ENCODE measurements at regions of chr9 and their contacts with region 1.

Region 1: DNA sequence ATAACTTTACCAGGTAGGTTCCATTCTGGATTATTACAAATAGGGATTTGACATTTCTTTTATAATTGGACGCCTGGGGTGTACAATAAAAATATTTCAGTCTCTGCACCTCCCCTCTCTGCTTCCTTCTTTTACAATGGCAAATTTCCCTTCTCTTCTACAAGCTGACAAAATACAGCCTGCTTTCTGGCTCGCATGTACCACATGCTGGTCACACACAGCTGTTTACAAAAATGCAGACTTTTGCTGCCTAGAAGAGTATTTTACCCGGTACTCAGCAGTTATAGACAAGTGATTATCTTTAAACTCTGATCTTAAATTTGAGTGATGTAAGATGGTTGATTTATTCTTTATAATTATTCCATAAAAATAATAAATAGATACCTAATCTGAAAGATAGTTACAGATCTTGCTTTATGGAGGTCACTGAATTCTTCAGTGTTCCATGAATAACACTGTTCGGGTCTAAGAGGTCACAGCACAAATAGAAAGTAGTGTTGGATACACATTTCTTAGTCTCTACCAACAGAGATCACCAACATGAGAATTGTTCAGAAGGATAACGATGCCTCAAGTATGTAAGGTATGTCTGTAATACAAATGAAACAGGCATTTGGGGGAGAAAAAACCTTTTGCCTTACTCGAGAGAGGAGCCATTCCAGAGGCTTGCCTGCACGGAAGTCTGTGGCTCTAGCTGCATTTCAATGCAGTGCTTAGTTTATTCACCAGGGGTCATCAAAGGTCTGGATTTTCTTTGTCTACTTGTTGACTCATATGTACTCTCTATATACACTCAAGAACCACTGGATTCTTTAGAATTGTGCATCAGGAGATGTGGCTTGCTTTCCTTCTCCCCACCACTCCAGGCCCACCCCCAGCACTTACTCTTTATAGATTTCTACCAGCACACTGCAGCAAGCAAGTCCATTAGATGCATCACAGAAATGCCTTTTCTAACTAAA is 206.6 kb upstream of the RFX3 start:
- DNase-seq: no peak
- H3K4me3 ChIP-seq: peak overlapping the region in 2 of 4 donors; percentile 13 to 19
- H3K27ac ChIP-seq: peak overlapping the region in 3 of 4 donors; percentile 28 to 44 (median 40)
- H3K4me1 ChIP-seq: peaks cover 0 to 15% (median 0%) of the 10 kb centered on the region in 4 donors
- H3K27me3 ChIP-seq: no peaks in the 10 kb centered on the region
- CTCF ChIP-seq: peak; percentile 19 to 65 (median 57)
- EP300 ChIP-seq: no peak
- POLR2A ChIP-seq: no peak

Region 2: DNA sequence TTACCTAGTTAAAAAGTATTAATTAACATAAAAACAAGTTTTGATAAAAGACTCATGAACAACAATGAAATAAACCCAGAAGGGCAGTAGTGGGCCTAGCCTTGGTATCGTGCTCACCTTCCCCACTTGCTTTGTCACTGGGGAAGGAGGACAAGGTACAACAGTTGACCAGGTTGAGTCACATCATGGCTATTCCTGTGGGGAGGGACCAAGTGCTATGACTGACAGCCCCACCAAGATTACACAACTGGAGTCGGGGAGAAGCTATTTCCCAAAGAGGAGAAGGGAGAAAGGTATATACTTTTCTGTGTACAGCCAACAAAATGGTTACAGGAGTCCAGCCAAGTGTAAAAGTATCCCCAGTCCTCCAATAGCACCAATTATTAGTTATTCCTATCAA is 44.8 kb after region 1 on chr9:
- intact Hi-C with region 1: no loop called
- DNase-seq: no peak
- H3K4me3 ChIP-seq: no peak overlapping the region
- H3K27ac ChIP-seq: no peak overlapping the region
- H3K4me1 ChIP-seq: no peaks in the 10 kb centered on the region
- H3K27me3 ChIP-seq: no peaks in the 10 kb centered on the region
- CTCF ChIP-seq: no peak
- EP300 ChIP-seq: no peak
- POLR2A ChIP-seq: no peak

Region 3: DNA sequence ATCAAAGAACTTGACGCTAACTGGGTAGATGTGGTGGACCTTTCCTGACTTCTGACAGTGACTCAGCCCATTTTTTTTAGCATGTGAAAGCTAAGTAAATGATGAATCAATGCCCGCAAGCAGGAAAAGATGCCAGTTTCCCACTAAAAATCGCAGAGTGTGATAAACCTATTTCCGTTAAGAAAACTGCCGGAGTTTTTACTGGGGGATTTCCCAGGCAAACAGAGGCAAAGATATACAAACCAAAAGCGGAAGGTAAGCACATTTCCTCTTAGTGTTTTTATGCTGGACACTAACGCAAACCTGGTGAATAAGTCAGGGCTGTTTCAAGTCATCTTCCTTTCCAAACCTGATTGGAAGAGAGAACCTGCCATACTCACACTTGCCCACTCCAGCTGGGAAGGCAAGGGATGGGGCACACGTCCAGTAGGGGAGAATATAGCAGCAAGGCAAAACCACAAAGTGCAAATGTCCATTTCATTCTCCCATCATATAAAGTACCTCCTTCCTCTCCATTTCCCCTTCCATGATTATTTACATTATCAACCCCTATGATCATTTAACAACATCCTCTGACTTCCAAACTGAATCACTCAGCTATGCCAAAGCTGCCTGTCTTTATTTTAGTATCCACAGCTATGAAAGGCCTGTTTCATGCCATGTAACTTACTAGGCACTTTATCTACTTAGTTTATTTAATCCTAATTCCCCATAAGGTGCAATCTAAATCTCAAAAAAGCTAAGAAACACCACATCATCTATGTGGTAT is 143.2 kb after region 1 on chr9:
- intact Hi-C with region 1: no loop called
- DNase-seq: no peak
- H3K4me3 ChIP-seq: no peak overlapping the region
- H3K27ac ChIP-seq: no peak overlapping the region
- H3K4me1 ChIP-seq: no peaks in the 10 kb centered on the region
- H3K27me3 ChIP-seq: no peaks in the 10 kb centered on the region
- CTCF ChIP-seq: no peak
- EP300 ChIP-seq: no peak
- POLR2A ChIP-seq: no peak

Region 4: DNA sequence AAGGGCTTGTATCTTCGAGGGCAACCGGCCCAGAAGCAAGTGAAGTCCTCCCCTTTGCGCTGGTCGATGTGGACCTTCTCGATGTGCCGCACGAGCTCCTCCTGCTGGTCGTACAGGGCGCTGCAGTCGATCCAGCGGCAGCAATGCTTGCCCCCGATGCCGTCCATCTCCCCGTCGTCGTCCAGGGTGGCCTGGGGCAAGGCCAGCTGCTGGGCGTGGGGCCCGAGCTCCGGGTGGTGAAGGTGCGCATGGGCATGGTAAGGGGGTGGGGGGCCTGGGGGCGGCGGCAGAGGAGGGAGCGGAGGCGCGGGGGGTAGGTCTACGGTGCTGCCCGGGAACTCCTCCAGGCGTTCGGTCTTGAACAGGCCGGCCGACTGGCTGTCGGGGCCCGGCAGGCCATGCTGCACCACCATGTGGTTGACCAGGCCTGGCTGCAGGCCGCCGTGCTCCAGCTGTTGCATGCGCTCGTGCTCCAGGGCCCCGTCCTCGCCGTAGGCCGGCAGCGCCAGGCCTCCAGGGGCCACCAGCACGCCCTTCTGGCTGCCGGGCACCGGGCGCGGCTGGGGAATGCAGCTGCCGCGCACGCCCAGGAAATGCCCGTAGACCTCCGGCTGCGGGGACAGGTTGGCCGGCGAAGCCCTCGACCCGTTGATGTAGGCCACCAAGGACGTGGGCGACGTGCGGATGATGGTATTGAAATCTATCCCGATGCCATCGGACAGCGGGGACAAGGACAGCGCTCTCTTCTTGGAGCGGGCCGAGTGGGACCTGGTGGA is 385.7 kb after region 1 on chr9:
- intact Hi-C with region 1: loop called (anchors 5 kb)
- DNase-seq: no peak
- H3K4me3 ChIP-seq: no peak overlapping the region
- H3K27ac ChIP-seq: peak overlapping the region in 1 of 4 donors; percentile 76
- H3K4me1 ChIP-seq: peaks cover 0 to 36% (median 32%) of the 10 kb centered on the region in 4 donors
- H3K27me3 ChIP-seq: no peaks in the 10 kb centered on the region
- CTCF ChIP-seq: peak in 3 of 4 experiments; percentile 8 to 33 (median 12)
- EP300 ChIP-seq: no peak
- POLR2A ChIP-seq: no peak

Region 5: DNA sequence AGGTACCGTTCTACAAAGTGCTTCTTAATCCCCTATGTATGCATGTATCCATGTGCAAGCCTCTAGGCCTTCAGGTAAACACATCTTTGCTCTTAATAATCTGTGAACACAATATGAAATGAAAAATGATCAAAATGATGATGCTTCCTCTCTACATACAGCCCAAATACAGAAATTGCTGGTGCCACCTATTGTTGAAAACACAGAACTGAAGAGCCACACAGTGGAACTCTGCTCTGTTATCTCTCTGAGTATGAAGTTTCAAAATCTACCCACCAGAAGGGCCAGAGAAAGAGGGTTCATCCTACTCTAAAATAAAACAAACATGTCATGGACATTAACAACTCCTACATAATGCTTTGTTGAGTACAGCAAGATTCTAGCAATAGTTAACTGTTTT is 496.2 kb after region 1 on chr9:
- intact Hi-C with region 1: loop called (anchors 10 kb)
- DNase-seq: no peak
- H3K4me3 ChIP-seq: no peak overlapping the region
- H3K27ac ChIP-seq: no peak overlapping the region
- H3K4me1 ChIP-seq: no peaks in the 10 kb centered on the region
- H3K27me3 ChIP-seq: no peaks in the 10 kb centered on the region
- CTCF ChIP-seq: peak in 3 of 4 experiments; percentile 27 to 39 (median 38)
- EP300 ChIP-seq: no peak
- POLR2A ChIP-seq: no peak

Region 6: DNA sequence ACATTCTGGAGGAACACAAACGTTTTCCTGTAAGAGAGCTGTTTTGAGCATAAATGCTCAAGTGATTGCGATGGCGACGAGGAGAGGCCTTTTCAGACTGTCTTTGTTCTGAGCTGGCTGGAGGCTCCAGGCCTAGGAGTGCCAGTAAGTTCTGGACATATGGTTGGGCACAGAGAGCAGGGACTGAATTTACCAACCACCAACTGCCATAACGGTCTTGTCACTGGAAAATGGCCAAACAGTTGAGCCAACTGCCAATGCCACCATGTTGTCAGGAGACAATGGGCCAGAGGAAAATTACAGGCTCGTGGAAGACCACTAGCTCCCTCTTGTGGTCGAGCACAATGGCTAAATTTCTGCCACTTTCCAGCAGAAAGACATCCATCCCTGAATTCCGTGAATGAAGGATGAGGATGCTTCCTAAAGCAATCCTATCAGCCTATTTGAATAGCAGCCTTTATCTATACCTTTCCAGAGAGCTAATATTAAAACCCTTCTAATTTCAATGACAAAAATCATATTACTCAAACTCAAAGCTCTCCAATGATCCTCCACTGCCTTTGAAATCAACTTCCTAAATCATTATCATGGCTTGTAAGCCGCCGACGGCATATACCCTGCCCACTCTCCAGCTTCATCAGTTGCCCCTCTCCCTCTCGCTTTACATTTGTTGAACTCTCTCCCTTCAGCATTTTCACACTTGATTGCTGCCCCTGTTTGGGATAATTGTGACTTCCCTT is 634.4 kb after region 1 on chr9:
- intact Hi-C with region 1: loop called (anchors 2 kb)
- DNase-seq: peak; percentile 66
- H3K4me3 ChIP-seq: no peak overlapping the region
- H3K27ac ChIP-seq: peak overlapping the region in 1 of 4 donors; percentile 43
- H3K4me1 ChIP-seq: no peaks in the 10 kb centered on the region
- H3K27me3 ChIP-seq: no peaks in the 10 kb centered on the region
- CTCF ChIP-seq: peak; percentile 19 to 50 (median 44)
- EP300 ChIP-seq: no peak
- POLR2A ChIP-seq: no peak

Measured in sigmoid colon (tissue), 7 donors.